ENCODE measurements at regions of chr12 and their contacts with region 1.

Region 1: DNA sequence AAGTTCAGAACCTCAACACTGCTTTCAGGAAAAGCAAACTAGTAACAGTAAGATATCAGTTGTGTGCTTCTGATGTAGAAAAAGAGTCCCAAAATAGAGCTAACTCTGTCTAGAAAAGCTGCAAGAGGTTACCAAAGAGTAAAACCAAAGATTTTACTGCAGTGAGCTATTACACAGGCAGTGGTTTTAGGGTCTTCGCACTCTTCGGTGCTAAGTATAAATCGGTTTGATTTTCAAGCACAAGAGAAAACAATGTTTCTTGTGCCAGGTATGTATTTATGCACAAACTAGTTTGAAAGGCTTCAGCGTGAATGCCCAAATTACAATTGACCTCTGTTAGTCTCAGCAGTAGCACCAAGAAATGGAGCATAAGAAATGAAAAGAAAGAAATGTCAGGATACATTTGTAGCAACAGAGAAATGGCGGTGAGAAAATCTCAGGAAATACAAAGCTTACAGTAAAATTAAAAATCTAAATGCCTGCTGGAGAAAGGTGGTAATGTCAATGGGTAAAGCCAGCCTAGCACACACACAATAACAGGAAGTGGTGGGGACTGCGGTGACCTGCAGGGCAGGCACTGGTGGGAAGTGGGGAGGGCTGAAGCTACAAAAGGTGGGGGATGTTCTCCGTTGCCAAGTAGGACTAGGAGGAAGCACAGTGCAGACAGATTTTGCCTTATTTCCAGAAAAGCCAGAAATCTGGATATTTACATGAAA is 18.0 kb upstream of the DYRK2 start:
- DNase-seq: peak; percentile 96
- H3K4me3 Mint-ChIP-seq: peak overlapping the region; percentile 73
- H3K27ac Mint-ChIP-seq: peak overlapping the region; percentile 86
- H3K4me1 Mint-ChIP-seq: peaks cover 43% of the 10 kb centered on the region
- H3K27me3 Mint-ChIP-seq: peaks cover 2% of the 10 kb centered on the region

Region 2: GRCh38 chr12:67355578-67356379 is 274.8 kb before region 1 on chr12:
- intact Hi-C with region 1: loop called (anchors 5 kb)
- DNase-seq: peak; percentile 71
- H3K4me3 Mint-ChIP-seq: no peak overlapping the region
- H3K27ac Mint-ChIP-seq: no peak overlapping the region
- H3K4me1 Mint-ChIP-seq: peaks cover 15% of the 10 kb centered on the region
- H3K27me3 Mint-ChIP-seq: no peaks in the 10 kb centered on the region

Region 3: GRCh38 chr12:67578976-67579661 is 51.4 kb before region 1 on chr12:
- intact Hi-C with region 1: loop called (anchors 2 kb)
- DNase-seq: peak; percentile 76
- H3K4me3 Mint-ChIP-seq: peak overlapping the region; percentile 17
- H3K27ac Mint-ChIP-seq: peak overlapping the region; percentile 52
- H3K4me1 Mint-ChIP-seq: peaks cover 24% of the 10 kb centered on the region
- H3K27me3 Mint-ChIP-seq: peaks cover 22% of the 10 kb centered on the region

Region 4: DNA sequence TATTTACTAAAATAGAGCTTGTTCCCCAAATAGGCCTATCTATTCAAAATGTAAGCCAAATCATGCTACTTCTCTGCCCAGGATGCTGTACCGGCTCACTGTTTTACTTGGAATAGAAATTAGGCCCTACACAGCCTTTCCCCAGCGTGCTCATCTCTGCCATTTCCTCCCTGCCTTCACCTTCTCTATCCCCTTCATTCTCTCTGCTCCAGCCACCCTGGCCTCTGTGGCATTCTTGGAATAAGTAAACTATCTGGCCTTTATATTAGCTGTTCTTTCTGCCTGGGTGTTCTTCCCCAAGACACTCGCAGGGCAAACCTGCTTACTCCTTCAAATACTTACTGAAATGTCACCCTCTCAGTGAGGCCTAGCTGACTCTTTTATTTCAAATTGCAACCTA is 12.9 kb before region 1 on chr12:
- intact Hi-C with region 1: no loop called
- DNase-seq: no peak
- H3K4me3 Mint-ChIP-seq: no peak overlapping the region
- H3K27ac Mint-ChIP-seq: no peak overlapping the region
- H3K4me1 Mint-ChIP-seq: peaks cover 3% of the 10 kb centered on the region
- H3K27me3 Mint-ChIP-seq: peaks cover 11% of the 10 kb centered on the region

Region 5: GRCh38 chr12:67698672-67699581 is 68.4 kb after region 1 on chr12:
- intact Hi-C with region 1: loop called (anchors 2 kb)
- DNase-seq: peak; percentile 83
- H3K4me3 Mint-ChIP-seq: peak overlapping the region; percentile 70
- H3K27ac Mint-ChIP-seq: peak overlapping the region; percentile 65
- H3K4me1 Mint-ChIP-seq: peaks cover 40% of the 10 kb centered on the region
- H3K27me3 Mint-ChIP-seq: peaks cover 58% of the 10 kb centered on the region

Region 6: GRCh38 chr12:68180792-68181744 is 550.5 kb after region 1 on chr12:
- intact Hi-C with region 1: loop called (anchors 10 kb)
- DNase-seq: peak; percentile 89
- H3K4me3 Mint-ChIP-seq: peak overlapping the region; percentile 37
- H3K27ac Mint-ChIP-seq: peak overlapping the region; percentile 79
- H3K4me1 Mint-ChIP-seq: peaks cover 47% of the 10 kb centered on the region
- H3K27me3 Mint-ChIP-seq: no peaks in the 10 kb centered on the region